H1 (cell line): ENCODE measurements at regions of chr2 and their contacts with region 1.

Region 1: DNA sequence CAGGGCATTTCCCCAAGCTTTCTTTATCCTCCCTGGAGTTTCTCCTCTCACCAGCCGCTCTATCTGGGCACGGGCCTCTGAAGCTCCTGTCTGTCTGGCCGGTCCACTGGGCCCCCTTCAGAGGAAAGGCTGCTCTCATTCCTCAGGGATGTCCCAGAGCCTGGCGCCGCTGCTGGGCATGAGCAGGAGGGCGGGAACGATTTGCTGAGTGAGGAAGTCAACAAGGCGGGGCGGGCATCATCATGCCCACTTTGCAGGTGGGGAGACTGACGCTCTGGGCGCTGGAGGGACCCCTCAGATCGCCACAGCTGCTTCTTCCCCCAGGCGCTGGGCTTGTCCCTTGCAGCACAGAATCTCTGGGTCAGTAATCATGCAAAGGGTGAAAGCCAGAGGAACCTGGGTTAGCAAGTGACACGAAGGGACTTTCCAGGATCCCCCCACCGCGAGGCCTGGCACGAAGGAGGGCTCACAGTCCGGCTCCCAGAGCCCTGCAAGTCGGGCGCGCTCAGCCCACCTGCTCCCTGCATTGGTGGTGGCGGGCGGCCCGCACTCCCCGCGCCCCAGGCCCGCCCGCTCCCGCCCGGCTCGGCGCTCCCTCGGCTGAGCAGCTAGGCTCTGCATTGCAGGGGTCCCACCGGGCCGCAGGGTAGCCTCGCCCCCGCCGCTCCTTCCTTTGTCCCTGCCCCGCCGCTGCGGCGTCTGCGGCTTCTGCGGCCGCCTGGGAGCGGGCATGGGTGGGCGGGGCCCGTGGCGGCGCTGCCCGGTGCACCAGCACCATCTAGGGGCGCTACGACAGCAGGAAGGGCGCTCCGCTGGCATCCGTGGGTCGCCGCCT is 157.8 kb downstream of the CYRIA start:
- DNase-seq: peak; percentile 27 to 82
- H3K4me3 ChIP-seq: peak overlapping the region; percentile 36 to 61 (median 39)
- H3K27ac ChIP-seq: no peak overlapping the region
- H3K4me1 ChIP-seq: peaks cover 0 to 7% (median 6%) of the 10 kb centered on the region in 4 experiments; a peak in 4 of 7 replicates
- H3K27me3 ChIP-seq: peaks cover 0 to 4% (median 0%) of the 10 kb centered on the region in 4 experiments; a peak in 2 of 7 replicates
- CTCF ChIP-seq: peak; percentile 77 to 82 (median 82)
- EP300 ChIP-seq: peak in 1 of 2 experiments; percentile 48; a peak in 1 of 3 replicates
- POLR2A ChIP-seq: no peak
- RAD21 ChIP-seq: peak; percentile 93 to 95

Region 2: GRCh38 chr2:16413285-16413684 is 94.6 kb before region 1 on chr2:
- CTCF ChIA-PET with region 1: no interaction called
- POLR2A ChIA-PET with region 1: no interaction called
- DNase-seq: no peak
- H3K4me3 ChIP-seq: no peak overlapping the region
- H3K27ac ChIP-seq: no peak overlapping the region
- H3K4me1 ChIP-seq: no peaks in the 10 kb centered on the region
- H3K27me3 ChIP-seq: peaks cover 0 to 1% (median 0%) of the 10 kb centered on the region in 4 experiments; a peak in 1 of 7 replicates
- CTCF ChIP-seq: no peak
- EP300 ChIP-seq: no peak
- POLR2A ChIP-seq: no peak
- RAD21 ChIP-seq: no peak

Region 3: DNA sequence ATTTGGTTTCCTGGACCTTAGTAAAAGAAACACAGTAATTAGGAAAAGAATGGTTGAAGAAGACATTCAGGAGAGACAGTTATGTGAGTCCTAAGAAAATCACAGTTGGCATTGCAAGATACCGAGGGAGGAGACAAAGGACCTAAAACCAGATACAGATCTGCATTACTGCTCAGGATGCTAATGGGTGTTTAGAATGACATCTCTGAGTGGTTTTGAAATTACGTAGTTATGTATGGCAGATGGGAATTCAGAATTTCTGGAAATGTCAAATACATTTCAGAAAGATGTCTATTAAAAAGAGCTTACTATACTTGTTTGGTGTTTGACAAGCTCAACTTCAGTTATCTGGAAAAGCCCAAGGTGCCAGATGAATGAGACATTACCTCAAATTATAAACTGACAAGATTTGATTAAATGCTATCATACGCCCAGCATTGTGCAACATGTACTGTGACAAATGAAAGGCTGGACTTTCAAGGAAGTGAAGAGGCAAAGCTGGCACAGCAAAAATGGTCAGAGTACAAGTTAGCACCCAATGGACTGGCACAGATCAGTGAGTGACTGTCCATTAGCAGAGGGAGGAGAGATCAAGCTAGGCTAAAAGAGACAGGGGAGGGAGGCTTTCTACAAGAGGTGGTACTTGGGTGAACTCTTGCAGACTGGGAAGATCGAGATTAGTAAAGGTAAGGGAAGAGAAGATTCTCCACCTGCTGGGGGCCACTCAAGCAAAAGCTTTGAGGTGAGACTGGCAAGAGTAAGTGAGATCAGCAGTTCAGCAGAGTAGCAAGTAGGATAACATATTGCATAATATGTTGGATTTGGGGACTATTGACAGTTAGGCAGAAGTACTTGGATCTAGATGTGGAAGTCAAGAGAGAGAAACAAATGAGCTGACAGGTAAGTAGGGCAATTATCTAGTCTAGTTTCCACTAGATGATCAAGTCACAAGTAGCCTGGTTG is 11.2 kb before region 1 on chr2:
- CTCF ChIA-PET with region 1: interaction called, 31 read pairs
- POLR2A ChIA-PET with region 1: no interaction called
- DNase-seq: no peak
- H3K4me3 ChIP-seq: no peak overlapping the region
- H3K27ac ChIP-seq: no peak overlapping the region
- H3K4me1 ChIP-seq: no peaks in the 10 kb centered on the region
- H3K27me3 ChIP-seq: no peaks in the 10 kb centered on the region
- CTCF ChIP-seq: no peak
- EP300 ChIP-seq: no peak
- POLR2A ChIP-seq: no peak
- RAD21 ChIP-seq: no peak